ENCODE measurements at regions of chr11 and their contacts with region 1.

Region 1: GRCh38 chr11:94849839-94850238 is 81.7 kb downstream of the AMOTL1 start:
- DNase-seq: peak; percentile 50 to 82 (median 60)
- ATAC-seq: no peak
- H3K4me3 ChIP-seq: no peak overlapping the region
- H3K27ac ChIP-seq: no peak overlapping the region
- H3K4me1 ChIP-seq: peaks cover 12% of the 10 kb centered on the region
- H3K27me3 ChIP-seq: no peaks in the 10 kb centered on the region

Region 2: DNA sequence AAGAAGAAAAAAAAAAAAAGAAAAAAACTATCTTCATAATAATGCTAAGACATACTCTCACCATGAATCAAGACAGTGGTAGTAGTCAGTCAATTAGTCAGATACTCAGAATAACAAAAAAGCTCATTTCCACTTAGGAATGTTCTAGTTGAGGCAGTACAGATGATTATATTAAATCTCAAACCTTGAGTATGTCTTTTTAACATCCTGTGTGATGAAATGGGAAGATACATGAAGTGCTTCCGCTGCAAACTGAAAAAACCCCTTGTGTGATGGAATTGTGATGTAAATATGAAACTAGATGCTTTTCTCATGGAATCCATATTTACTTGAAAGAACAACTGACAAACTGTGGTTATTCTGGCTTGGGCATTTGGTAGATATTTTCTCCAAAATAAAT is 68.0 kb before region 1 on chr11:
- intact Hi-C with region 1: no loop called
- DNase-seq: no peak
- ATAC-seq: no peak
- H3K4me3 ChIP-seq: no peak overlapping the region
- H3K27ac ChIP-seq: no peak overlapping the region
- H3K4me1 ChIP-seq: peaks cover 8% of the 10 kb centered on the region
- H3K27me3 ChIP-seq: no peaks in the 10 kb centered on the region

Region 3: DNA sequence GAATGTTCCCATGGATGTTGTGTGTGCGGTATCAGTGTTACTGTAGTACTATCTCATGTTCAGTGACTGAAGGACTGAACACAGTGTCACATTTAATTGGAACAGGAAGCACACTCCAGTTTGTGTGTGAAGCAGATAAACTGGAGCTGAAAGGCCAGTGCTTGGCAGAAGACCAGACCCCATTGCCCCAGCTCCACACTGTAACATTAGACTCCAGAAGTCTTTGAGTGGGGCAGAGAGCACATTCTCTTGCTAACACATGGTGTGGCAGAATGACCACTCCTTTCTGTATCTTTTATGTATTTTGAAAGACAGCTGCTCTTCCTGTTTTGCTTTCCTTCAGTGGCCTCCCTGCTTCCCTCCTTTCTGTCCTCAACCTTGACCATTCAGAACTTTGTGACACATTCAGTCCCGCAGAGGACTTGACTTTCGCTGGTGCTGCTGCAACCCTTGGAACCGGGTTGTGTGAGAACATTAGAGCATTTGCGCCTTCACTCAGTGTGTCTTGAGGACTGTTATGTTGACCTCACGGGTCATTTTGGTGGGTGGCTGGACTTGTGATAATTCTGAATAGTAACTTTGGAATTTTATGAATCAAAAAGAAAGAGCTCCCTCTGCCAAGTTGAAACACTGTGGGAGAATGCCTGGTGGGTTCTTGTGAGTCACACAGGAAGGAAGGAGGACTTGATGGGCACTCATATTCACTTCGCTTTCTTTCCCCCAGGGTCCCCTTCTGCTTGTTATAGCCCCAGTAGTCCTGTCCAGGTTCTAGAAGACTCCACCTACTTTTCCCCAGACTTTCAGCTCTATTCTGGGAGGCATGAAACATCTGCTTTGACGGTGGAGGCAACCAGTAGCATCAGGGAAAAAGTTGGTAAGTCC is 55.3 kb before region 1 on chr11:
- intact Hi-C with region 1: loop called in 1 of 4 experiments (anchors 10 kb)
- DNase-seq: peak; percentile 81 to 89 (median 83)
- ATAC-seq: peak; percentile 88 to 93
- H3K4me3 ChIP-seq: no peak overlapping the region
- H3K27ac ChIP-seq: peak overlapping the region; percentile 94
- H3K4me1 ChIP-seq: peaks cover 24% of the 10 kb centered on the region
- H3K27me3 ChIP-seq: no peaks in the 10 kb centered on the region

Region 4: GRCh38 chr11:95182397-95182796 is 332.6 kb after region 1 on chr11:
- intact Hi-C with region 1: no loop called
- DNase-seq: no peak
- ATAC-seq: no peak
- H3K4me3 ChIP-seq: no peak overlapping the region
- H3K27ac ChIP-seq: no peak overlapping the region
- H3K4me1 ChIP-seq: no peaks in the 10 kb centered on the region
- H3K27me3 ChIP-seq: no peaks in the 10 kb centered on the region

Measured in right cardiac atrium (tissue), 5 donors.